HepG2 (cell line): ENCODE measurements at regions of chr7 and their contacts with region 1.

Region 1: GRCh38 chr7:142482891-142483658 is 225.2 kb upstream of the PRSS58 start:
- DNase-seq: peak; percentile 7
- ATAC-seq: peak; percentile 91
- H3K4me3 ChIP-seq: no peak overlapping the region
- H3K27ac ChIP-seq: no peak overlapping the region
- H3K4me1 ChIP-seq: no peaks in the 10 kb centered on the region
- H3K27me3 ChIP-seq: no peaks in the 10 kb centered on the region
- CTCF ChIP-seq: peak; percentile 67
- EP300 ChIP-seq: no peak
- POLR2A ChIP-seq: no peak
- RAD21 ChIP-seq: no peak

Region 2: DNA sequence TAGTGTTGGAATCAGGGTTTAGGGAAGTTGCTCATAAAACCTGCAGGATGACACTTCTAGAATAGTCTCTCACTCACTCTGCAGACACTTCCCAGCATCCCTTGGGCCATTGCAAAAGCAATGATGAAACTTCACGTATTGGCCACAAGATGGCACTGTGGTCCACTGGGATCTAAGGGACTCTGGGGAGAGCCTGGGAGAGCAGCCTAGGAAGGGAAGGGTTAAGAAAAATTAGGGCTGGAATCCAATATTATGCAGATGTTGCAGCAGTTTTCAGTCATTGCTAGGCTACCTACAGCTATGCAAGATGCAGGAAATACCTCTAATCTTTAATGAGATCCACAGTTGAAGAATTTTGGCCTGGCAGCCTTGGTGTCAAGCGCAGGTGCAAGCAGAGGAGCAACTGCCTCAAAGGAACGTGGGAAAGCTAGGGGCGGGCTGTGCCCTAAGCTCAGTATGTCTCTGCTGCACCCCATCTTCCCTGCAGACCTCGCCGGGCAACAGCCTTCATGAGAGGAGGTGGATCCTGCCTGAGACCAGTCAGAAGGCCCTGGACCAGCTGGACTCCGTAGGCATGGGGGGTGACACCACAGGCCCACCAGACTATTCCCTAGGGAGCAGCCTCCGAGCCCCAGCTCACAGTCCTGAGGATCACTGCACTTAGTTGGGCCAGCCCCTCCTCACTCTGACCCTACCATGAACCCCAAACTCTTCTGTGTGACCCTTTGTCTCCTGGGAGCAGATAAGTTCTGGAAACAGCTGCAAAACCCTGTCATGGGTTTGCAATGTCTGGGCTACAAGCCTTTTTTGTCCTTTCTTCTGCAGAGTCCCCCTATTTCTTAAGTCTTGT is 97.4 kb before region 1 on chr7:
- CTCF ChIA-PET with region 1: no interaction called
- POLR2A ChIA-PET with region 1: no interaction called
- in situ Hi-C with region 1: no loop called
- intact Hi-C with region 1: loop called (anchors 1 kb)
- DNase-seq: peak; percentile 32
- ATAC-seq: peak; percentile 82
- H3K4me3 ChIP-seq: no peak overlapping the region
- H3K27ac ChIP-seq: no peak overlapping the region
- H3K4me1 ChIP-seq: peaks cover 18% of the 10 kb centered on the region
- H3K27me3 ChIP-seq: no peaks in the 10 kb centered on the region
- CTCF ChIP-seq: peak; percentile 53
- EP300 ChIP-seq: no peak
- POLR2A ChIP-seq: no peak
- RAD21 ChIP-seq: no peak